IMR-90 (cell line): ENCODE measurements at regions of chr2 and their contacts with region 1.

Region 1: GRCh38 chr2:114346658-114347057 is 95.8 kb upstream of the DPP10 start:
- DNase-seq: no peak
- ATAC-seq: no peak
- H3K4me3 ChIP-seq: no peak overlapping the region
- H3K27ac ChIP-seq: no peak overlapping the region
- H3K4me1 ChIP-seq: no peaks in the 10 kb centered on the region
- H3K27me3 ChIP-seq: no peaks in the 10 kb centered on the region
- CTCF ChIP-seq: no peak
- POLR2A ChIP-seq: no peak
- RAD21 ChIP-seq: no peak

Region 2: DNA sequence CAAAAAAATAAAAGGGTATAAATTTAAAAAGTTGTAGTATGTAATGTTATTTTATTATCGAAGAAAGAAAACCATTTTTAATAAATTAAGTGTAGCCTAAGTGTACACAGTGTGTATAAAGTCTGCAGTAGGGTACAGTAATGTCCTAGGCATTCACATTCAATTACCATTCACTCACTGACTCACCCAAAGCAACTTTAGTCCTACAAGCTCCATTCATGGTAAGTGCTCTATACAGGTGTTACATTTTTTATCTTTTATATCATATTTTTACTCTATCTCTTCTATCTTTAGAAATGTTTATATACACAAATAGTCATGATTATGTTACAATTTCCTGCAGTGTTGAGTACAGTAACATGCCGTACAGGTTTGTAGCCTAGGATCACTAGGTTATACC is 660.1 kb before region 1 on chr2:
- CTCF ChIA-PET with region 1: no interaction called
- POLR2A ChIA-PET with region 1: no interaction called
- dilution Hi-C with region 1: no loop called
- in situ Hi-C with region 1: no loop called
- intact Hi-C with region 1: no loop called
- DNase-seq: peak; percentile 74
- ATAC-seq: peak; percentile 90
- H3K4me3 ChIP-seq: no peak overlapping the region
- H3K27ac ChIP-seq: no peak overlapping the region
- H3K4me1 ChIP-seq: peaks cover 3% of the 10 kb centered on the region; the same call in 1 of the 2 replicates
- H3K27me3 ChIP-seq: no peaks in the 10 kb centered on the region
- CTCF ChIP-seq: no peak
- POLR2A ChIP-seq: no peak
- RAD21 ChIP-seq: no peak

Region 3: DNA sequence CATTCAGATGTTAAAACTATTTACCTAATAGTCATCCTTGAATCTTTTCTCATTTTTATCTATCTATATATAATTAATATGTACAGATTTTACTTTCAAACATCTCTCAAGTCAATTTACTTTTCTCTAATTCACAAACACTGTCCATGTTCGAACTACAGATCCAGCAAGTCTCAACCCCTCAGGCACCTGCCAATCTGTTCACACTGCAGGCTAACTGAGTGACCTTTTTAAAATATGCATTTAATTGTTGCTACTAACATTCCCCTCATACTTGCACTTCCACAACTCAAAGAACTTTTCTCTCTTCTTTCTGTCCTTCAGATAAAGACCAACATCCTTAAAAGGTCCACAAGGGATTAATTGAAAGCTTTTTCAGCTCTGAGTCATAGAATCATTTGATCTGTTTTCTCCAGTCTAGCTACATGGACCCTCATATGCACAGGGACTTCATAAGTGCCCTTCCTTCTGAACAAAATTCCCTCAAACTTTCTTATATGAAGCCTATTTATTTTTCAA is 1416.9 kb after region 1 on chr2:
- CTCF ChIA-PET with region 1: no interaction called
- POLR2A ChIA-PET with region 1: no interaction called
- dilution Hi-C with region 1: no loop called
- in situ Hi-C with region 1: no loop called
- intact Hi-C with region 1: loop called (anchors 10 kb)
- DNase-seq: no peak
- ATAC-seq: no peak
- H3K4me3 ChIP-seq: no peak overlapping the region
- H3K27ac ChIP-seq: no peak overlapping the region
- H3K4me1 ChIP-seq: no peaks in the 10 kb centered on the region
- H3K27me3 ChIP-seq: no peaks in the 10 kb centered on the region
- CTCF ChIP-seq: no peak
- POLR2A ChIP-seq: no peak
- RAD21 ChIP-seq: no peak